PC-3 (cell line): ENCODE measurements at regions of chr22 and their contacts with region 1.

Region 1: DNA sequence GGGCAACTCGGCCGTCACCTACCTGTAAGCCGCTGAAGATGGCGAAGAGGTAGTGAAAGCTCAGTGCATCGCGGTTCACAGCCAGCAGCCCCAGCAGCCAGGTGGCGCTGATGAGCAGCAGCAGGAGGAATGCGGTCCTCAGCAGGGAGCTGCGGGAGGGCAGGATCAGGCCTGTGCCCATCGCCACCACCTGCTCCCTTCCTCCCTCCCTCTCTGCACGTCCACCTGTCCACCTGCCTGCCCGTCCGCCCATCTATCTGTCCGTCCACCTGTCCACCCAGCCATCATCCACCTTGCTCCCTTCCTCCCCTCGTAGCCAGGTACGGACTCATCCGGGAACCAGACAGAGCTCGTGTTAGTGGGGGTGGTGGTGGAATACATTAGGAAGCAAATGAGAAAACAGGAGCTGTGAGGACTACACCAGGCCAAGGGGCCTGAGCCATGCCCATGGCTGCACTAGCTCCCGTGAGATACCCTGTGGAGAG is 32.2 kb downstream of the TRMU start:
- DNase-seq: peak; percentile 70
- ATAC-seq: peak; percentile 90
- H3K4me3 ChIP-seq: no peak overlapping the region
- H3K27ac ChIP-seq: no peak overlapping the region
- H3K4me1 ChIP-seq: no peaks in the 10 kb centered on the region
- H3K27me3 ChIP-seq: no peaks in the 10 kb centered on the region
- CTCF ChIP-seq: peak; percentile 78

Region 2: GRCh38 chr22:46444390-46444854 is 76.7 kb after region 1 on chr22:
- CTCF ChIA-PET with region 1: no interaction called
- POLR2A ChIA-PET with region 1: no interaction called
- intact Hi-C with region 1: no loop called
- DNase-seq: no peak
- ATAC-seq: peak; percentile 56
- H3K4me3 ChIP-seq: no peak overlapping the region
- H3K27ac ChIP-seq: no peak overlapping the region
- H3K4me1 ChIP-seq: no peaks in the 10 kb centered on the region
- H3K27me3 ChIP-seq: no peaks in the 10 kb centered on the region
- CTCF ChIP-seq: peak; percentile 26; the same call in 1 of the 2 replicates

Region 3: DNA sequence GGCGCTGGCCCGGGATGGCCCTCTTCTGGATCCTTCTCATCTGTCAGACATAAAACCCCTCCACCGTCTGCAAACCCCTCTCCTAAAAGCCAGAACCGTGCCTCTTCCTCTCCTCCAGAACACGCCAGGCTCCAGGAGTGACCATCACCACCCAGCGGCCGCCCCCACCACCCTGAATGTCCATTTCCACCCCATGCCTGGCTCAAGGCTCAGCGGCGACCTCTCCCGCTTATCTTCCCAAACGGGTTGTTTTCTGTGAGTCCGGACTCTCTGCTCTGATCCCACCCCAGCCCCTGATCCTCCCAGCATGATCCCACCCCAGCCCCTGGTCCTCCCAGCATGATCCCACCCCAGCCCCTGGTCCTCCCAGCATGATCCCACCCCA is 132.0 kb after region 1 on chr22:
- CTCF ChIA-PET with region 1: no interaction called
- POLR2A ChIA-PET with region 1: interaction called, 21 read pairs
- intact Hi-C with region 1: no loop called
- DNase-seq: no peak
- ATAC-seq: no peak
- H3K4me3 ChIP-seq: no peak overlapping the region
- H3K27ac ChIP-seq: no peak overlapping the region
- H3K4me1 ChIP-seq: peaks cover 25% of the 10 kb centered on the region
- H3K27me3 ChIP-seq: no peaks in the 10 kb centered on the region
- CTCF ChIP-seq: no peak

Region 4: DNA sequence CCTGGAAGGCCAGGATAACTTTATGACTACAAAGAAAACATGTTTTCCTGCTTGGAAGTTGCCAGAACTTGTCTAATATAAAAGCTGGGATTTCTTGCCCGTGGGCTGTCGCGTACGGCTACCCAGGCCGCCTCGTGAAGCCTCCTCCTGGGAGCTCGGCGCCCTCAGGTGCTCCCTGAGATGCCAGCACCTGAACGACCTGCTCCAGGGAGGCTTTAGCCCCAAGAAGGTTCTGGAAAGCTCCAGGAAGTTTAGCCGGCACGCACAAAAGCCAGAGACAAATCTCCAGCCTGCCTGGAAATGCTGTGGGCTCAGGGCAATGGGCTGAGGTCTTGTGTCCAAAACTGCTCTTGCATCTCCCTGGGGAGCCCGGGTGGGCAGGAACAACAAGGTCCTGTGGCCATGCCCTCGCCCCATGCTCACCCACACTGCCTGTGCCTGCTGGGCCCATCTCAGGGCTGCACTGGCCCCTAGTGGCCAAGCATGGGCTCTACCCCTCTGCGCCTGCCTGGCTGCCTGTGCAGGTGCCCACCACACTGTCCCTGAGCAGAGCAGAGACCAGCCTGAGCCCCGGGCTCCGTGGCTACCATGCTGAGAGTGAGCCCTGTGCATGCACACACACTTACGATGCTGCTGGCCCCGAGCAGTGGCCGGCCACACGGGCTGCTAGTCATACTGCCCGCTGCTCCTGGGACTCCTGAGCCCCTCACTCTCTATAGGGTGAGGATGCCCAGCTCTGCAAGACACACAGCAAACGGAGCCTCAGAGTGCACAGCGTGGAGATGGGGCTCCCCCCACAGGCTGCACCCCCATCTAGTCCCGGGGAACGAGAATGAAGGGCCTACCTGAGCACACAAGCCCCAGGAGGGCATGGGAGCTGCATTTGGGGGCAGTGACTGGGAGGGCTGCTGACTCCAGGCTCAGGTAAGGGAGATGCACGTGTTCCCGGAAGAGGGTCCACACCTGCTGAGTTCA is 174.5 kb after region 1 on chr22:
- CTCF ChIA-PET with region 1: interaction called, 7 read pairs
- POLR2A ChIA-PET with region 1: interaction called, 5 read pairs
- intact Hi-C with region 1: loop called (anchors 1 kb)
- DNase-seq: peak; percentile 70
- ATAC-seq: peak; percentile 74
- H3K4me3 ChIP-seq: no peak overlapping the region
- H3K27ac ChIP-seq: no peak overlapping the region
- H3K4me1 ChIP-seq: peaks cover 31% of the 10 kb centered on the region
- H3K27me3 ChIP-seq: no peaks in the 10 kb centered on the region
- CTCF ChIP-seq: peak; percentile 85